ENCODE measurements at regions of chr10 and their contacts with region 1.

Region 1: DNA sequence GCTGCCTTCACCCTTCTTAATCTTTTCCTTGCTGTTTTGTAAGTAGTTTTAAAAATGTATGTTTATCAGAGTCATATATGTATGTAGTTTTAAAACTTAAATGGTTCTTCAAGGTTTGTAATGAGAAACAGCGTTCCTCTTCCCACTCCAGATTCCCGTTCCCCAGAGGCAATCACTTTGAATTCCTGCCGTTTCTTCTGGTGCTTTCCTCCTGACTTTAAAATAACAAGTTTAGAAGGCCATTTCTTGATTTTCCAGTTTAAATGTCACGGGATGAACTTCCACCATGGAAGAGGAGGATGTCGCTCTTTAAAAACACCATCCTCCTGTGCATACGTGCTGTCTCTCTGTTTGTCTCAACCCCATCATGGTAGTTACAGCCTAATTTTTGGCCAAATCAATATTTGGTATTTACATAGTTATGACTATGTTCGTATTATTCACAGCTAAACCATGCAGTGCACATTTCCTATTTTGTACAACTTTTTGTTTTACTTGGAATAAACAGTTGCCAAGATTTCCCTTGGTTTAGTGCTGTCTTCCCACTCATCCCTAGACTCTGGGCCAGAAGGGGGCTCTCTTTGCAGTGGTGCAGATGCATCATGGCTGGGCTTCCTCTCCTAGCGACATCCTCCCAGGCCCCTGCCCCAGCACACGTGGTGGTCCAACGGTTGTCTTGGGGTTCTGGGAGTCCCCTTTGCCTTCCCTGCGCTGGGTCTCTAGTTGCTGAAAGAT is 151.4 kb downstream of the PTPN20 start:
- DNase-seq: no peak
- ATAC-seq: peak; percentile 30
- H3K4me3 ChIP-seq: no peak overlapping the region
- H3K27ac ChIP-seq: no peak overlapping the region
- H3K4me1 ChIP-seq: peaks cover 0 to 3% of the 10 kb centered on the region in 2 donors
- H3K27me3 ChIP-seq: no peaks in the 10 kb centered on the region

Region 2: DNA sequence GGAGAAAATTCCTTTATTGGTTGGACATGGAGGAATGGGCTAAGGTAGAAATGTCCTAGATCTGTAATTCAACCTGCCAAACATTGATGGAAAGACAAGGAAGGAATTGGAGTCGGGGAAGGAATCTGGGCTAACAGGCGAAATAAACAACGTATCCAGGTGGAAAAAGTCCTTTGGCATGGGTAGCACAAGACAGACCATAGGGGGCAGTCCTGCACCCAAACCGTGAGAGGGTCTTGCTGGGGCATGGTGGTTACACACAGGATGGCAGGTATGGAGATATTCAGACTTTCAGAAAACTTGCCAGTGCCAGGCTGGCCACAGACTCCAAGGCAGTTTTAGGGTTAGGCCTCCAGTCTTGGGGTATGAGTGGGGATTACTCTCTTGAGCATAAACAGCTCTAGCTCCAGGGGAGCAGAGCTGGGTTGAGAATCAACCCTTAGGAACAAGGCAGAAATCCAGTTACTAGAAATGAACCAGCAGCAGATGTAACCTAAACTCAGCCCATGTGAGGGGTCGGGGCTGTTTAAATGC is 48.8 kb after region 1 on chr10:
- intact Hi-C with region 1: loop called in 1 of 2 experiments (anchors 2 kb)
- DNase-seq: no peak
- ATAC-seq: no peak
- H3K4me3 ChIP-seq: no peak overlapping the region
- H3K27ac ChIP-seq: no peak overlapping the region
- H3K4me1 ChIP-seq: peaks cover 3 to 4% of the 10 kb centered on the region in 2 donors
- H3K27me3 ChIP-seq: no peaks in the 10 kb centered on the region